ENCODE measurements at regions of chr7 and their contacts with region 1.

Region 1: DNA sequence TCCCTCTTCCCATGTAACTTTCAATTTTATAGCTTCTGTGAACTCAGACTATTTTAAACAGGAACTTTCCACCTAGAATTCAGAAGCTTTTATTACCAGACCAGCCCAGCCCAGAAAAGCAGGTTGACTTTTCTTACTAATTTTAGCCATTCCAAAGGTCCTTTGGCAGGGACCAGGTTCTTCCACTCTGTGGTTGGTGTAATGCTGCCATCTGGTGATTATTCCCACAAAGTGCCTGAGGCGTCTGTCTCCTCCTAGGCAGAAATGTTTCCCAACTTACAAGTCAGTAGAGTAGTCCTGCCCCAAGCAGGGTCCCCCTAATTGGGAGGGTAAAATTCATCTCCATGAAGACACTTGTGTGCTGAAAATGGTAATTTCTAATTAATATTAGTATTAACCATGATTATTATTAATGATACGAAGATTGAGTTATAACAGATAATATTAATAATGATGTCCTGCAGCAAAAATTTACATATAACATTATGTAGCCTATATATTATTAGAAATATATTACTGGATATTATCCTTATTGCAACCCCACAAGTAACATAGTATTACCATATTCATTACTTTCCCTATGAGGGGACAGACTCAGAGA is 53.0 kb upstream of the PPP1R17 start:
- DNase-seq: peak in 1 of 2 donors; percentile 48
- ATAC-seq: peak; percentile 77 to 88 (median 80)
- H3K4me3 ChIP-seq: no peak overlapping the region
- H3K27ac ChIP-seq: no peak overlapping the region
- H3K4me1 ChIP-seq: peaks cover 0 to 6% (median 0%) of the 10 kb centered on the region in 9 donors
- H3K27me3 ChIP-seq: no peaks in the 10 kb centered on the region
- CTCF ChIP-seq: peak; percentile 42 to 76 (median 67)

Region 2: DNA sequence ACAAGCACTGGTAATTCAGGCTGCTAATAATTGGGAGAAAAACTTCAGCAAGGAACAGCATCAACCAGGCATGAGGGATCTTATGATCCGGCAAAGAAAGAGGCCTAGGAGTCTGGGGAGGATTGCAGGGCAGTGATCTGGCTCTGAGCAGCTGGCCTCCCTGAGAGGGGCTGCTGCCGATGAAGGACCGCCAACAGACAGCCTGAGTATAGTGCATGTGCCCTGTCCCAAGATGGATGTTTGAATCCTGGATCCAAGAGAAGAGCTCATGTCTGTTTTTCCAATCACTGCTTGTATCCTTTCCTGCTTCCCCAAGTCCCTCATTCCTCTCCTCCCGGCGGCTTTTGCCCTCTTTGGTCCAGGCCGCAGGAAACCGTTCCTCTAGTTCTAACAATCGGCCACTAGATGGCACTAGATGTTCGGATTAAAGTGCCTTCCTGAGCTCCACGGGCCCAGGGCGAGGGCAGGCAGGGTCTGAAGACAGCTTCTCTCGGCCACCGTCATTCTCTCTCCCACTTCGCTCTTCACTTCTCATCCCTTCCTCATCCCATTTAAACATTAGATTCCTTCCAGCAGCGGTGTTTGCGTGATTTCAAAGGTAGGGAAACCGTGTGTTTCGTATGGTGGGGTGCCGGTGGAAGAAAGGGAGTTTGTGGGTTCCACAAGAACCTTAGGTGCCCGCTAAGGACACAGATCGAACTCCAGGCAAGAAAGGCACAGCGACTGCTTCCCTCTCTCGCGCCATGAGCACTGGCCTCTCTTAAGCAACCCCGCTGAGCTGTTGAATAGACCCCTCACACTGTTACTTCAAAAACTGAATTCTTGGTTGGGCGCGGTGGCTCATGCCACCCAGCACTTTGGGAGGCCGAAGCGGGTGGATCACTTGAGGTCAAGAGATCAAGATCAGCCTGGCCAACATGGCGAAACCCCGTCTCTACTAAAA is 499.5 kb before region 1 on chr7:
- intact Hi-C with region 1: loop called in 9 of 10 experiments (anchors 1 to 10 kb)
- DNase-seq: peak; percentile 59 to 73
- ATAC-seq: peak; percentile 86 to 97 (median 94)
- H3K4me3 ChIP-seq: no peak overlapping the region
- H3K27ac ChIP-seq: peak overlapping the region in 3 of 10 donors; percentile 19 to 62 (median 31)
- H3K4me1 ChIP-seq: peaks cover 0 to 10% (median 0%) of the 10 kb centered on the region in 9 donors
- H3K27me3 ChIP-seq: peaks cover 0 to 7% (median 0%) of the 10 kb centered on the region in 7 donors
- CTCF ChIP-seq: peak; percentile 61 to 84 (median 78)

Region 3: GRCh38 chr7:31192986-31193385 is 441.0 kb before region 1 on chr7:
- intact Hi-C with region 1: loop called in 3 of 10 experiments (anchors 5 kb)
- DNase-seq: peak; percentile 38 to 54
- ATAC-seq: peak; percentile 44 to 93 (median 72)
- H3K4me3 ChIP-seq: peak overlapping the region in 1 of 10 donors; percentile 10
- H3K27ac ChIP-seq: no peak overlapping the region
- H3K4me1 ChIP-seq: peaks cover 0 to 6% (median 0%) of the 10 kb centered on the region in 9 donors
- H3K27me3 ChIP-seq: peaks cover 0 to 45% (median 21%) of the 10 kb centered on the region in 7 donors
- CTCF ChIP-seq: peak; percentile 28 to 82 (median 65)

Region 4: DNA sequence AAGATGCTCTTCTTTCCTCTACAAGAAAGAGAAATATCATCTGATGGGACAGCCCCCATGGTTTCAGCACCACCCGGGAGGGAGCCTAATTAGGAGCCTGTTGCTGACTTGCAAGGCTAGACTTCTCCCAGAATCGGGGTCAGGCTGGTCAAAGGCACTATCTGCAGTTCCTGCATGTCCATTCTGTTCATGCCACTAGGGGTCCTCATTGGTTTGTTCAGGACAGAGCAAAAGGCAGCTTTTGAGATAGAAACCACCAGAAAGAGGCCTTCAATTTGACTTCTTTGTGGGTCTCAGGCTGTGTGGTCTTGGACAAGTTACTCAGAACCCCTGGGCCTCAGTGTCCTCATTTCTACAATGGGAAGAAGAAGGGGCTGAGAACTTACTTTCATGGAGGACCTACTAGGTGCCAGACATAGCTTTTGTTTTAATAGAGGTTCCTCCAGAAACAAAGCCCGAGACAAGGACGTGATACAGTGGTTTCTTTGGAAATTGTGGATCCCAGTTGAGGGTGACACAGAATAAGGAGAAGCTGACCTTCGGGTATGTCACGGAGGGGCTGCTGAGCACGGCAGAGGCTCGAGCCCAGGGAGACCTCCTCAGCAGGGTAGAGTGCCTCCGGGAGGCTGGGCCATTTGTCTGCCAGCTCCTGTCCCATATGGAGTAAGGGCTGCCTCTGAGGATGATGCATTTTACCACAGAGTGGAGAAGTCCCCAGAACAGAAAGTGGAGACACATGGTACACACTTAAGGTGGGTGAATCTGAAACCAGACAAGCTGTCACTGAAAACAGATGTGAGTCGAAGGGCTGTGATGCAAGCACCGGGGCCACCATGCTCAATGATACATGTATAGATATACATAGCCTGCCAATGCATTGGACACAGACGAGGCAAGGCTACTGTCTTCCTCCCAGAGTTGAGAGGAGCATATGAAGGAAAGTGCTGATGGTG is 260.4 kb before region 1 on chr7:
- intact Hi-C with region 1: loop called in 2 of 10 experiments (anchors 10 kb)
- DNase-seq: peak in 1 of 2 donors; percentile 16
- ATAC-seq: peak in 1 of 8 donors; percentile 51
- H3K4me3 ChIP-seq: no peak overlapping the region
- H3K27ac ChIP-seq: no peak overlapping the region
- H3K4me1 ChIP-seq: no peaks in the 10 kb centered on the region
- H3K27me3 ChIP-seq: peaks cover 0 to 59% (median 25%) of the 10 kb centered on the region in 7 donors
- CTCF ChIP-seq: peak in 8 of 9 donors; percentile 21 to 61 (median 52)

Region 5: DNA sequence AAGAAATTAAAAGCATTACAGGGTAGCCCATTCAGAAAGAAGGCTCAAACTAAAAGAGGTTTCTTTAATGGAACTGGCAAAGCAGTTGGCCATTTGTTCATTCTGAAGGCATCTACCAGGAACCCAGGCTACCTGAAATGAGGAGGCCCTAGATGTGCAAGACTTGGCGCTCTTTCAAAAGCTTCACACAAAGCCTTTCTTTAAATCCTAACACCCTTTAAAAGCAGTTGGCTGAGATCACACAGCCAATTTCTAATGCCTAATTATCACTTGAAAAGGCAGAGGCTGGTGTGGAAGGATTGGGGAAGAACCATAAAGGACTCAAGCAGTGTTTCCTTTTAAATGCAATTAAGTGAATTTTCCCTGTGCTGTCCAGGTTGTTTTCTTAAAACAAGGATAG is 76.2 kb after region 1 on chr7:
- intact Hi-C with region 1: no loop called
- DNase-seq: no peak
- ATAC-seq: no peak
- H3K4me3 ChIP-seq: no peak overlapping the region
- H3K27ac ChIP-seq: no peak overlapping the region
- H3K4me1 ChIP-seq: no peaks in the 10 kb centered on the region
- H3K27me3 ChIP-seq: peaks cover 0 to 3% (median 0%) of the 10 kb centered on the region in 7 donors
- CTCF ChIP-seq: no peak

Region 6: DNA sequence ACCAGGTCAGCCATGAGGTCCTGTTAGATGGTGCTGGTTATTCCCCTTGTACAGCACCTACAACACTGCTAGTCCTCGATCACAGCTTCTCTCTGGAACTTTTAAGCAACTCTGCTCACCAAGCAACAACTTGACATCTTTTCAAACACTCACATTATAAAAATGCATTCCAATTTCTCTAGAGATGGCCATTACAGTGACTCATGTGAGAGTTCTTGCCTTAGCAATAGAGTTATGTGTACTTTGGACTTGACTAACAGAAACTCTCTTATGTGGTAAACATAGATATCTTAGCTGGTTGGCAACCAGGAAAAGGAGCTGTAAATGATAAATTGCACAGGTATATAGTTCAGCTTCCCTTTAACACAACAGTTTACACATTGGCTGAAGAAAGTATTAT is 314.0 kb after region 1 on chr7:
- intact Hi-C with region 1: no loop called
- DNase-seq: no peak
- ATAC-seq: peak in 2 of 8 donors; percentile 20 to 52
- H3K4me3 ChIP-seq: no peak overlapping the region
- H3K27ac ChIP-seq: no peak overlapping the region
- H3K4me1 ChIP-seq: peaks cover 0 to 51% (median 23%) of the 10 kb centered on the region in 9 donors
- H3K27me3 ChIP-seq: no peaks in the 10 kb centered on the region
- CTCF ChIP-seq: no peak

Measured in heart right ventricle (tissue), 16 donors.